WTC11 (cell line): ENCODE measurements at regions of chr14 and their contacts with region 1.

Region 1: DNA sequence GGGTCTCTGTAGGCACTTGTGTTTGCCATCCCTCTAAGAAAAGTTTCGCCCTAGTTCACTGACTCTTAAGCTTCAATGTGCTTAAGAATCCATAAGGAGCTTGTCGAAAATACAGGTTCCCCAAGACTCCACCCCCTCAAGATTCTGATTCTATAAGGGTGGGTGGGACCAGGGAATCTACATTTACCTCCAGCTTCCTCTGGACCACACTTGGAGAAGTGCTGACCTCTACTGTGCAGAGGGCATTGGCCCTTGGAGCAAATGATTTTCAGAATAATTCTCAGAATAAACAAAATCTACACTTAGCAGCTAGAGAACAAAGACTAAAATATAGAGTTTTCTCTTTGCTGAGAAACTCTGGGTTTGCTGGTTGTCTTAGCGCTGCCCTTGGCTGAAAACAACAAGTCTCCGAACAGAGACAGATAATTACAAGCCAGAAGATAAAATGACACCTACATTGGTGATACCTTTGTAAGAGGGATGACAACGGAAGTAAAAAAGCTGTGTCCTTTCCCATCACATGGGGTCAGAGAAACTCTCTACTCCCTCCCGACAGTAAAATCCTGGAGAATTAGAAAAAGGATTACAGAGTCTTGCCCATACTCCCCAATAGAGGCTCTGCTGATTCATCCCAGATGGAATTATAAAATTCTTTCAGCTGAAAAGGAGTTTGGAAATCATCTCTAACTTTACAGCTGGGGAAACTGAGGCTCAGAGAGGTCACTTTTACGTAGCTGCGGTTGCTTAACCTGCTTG is 4.8 kb downstream of the TGFB3 start:
- DNase-seq: no peak
- ATAC-seq: peak; percentile 34
- H3K4me3 Mint-ChIP-seq: no peak overlapping the region
- H3K27ac Mint-ChIP-seq: no peak overlapping the region
- H3K4me1 Mint-ChIP-seq: peaks cover 52% of the 10 kb centered on the region
- H3K27me3 Mint-ChIP-seq: peaks cover 11% of the 10 kb centered on the region
- CTCF ChIP-seq: no peak

Region 2: GRCh38 chr14:75794615-75795038 is 182.4 kb before region 1 on chr14:
- CTCF ChIA-PET with region 1: interaction called, 28 read pairs
- POLR2A ChIA-PET with region 1: no interaction called
- DNase-seq: no peak
- ATAC-seq: peak; percentile 69
- H3K4me3 Mint-ChIP-seq: no peak overlapping the region
- H3K27ac Mint-ChIP-seq: no peak overlapping the region
- H3K4me1 Mint-ChIP-seq: peaks cover 10% of the 10 kb centered on the region
- H3K27me3 Mint-ChIP-seq: no peaks in the 10 kb centered on the region
- CTCF ChIP-seq: no peak

Region 3: GRCh38 chr14:76002199-76002782 is 25.3 kb after region 1 on chr14:
- CTCF ChIA-PET with region 1: no interaction called
- POLR2A ChIA-PET with region 1: no interaction called
- DNase-seq: no peak
- ATAC-seq: no peak
- H3K4me3 Mint-ChIP-seq: no peak overlapping the region
- H3K27ac Mint-ChIP-seq: no peak overlapping the region
- H3K4me1 Mint-ChIP-seq: no peaks in the 10 kb centered on the region
- H3K27me3 Mint-ChIP-seq: no peaks in the 10 kb centered on the region
- CTCF ChIP-seq: no peak